ENCODE measurements at regions of chr1 and their contacts with region 1.

Region 1: GRCh38 chr1:173429471-173430402 is 47.4 kb upstream of the PRDX6 start:
- DNase-seq: peak; percentile 28 to 52
- H3K4me3 ChIP-seq: no peak overlapping the region
- H3K4me3 Mint-ChIP-seq: no peak overlapping the region
- H3K27ac Mint-ChIP-seq: peak overlapping the region; percentile 23
- H3K4me1 ChIP-seq: peaks cover 42% of the 10 kb centered on the region
- H3K4me1 Mint-ChIP-seq: peaks cover 24% of the 10 kb centered on the region
- H3K27me3 ChIP-seq: no peaks in the 10 kb centered on the region
- H3K27me3 Mint-ChIP-seq: no peaks in the 10 kb centered on the region
- CTCF ChIP-seq: no peak

Region 2: DNA sequence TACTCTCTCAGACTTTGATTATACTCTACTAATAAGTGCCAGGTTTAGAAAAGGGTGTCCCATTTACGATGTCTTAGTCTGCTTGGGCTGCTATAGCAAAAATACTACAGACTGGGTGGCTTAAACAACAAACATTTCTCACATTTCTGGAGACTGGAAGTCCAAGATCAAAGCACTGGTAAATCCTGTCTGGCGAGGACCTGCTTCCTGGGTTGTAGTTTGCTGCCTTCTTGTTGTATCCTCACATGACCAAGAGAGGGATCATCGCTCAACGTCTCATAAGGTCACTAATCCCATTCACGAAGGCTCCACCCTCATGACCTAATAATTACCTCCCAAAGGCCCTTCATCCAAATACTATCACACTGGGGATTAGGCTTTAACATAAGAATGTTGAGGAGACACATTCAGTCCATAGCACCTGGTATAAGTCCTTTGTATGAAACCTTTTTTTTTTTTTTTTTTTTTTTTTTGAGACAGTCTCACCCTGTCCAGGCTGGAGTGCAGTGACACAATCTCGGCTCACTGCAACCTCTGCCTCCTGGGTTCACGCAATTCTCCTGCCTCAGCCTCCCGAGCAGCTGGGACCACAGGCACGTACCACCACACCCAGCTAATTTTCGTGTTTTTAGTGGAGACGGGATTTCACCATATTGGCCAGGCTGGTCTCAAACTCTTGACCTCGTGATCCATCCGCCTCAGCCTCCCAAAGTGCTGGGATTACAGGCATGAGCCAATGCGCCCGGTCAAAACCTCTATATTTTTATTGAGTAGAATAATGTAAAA is 59.6 kb after region 1 on chr1:
- CTCF ChIA-PET with region 1: no interaction called
- POLR2A ChIA-PET with region 1: no interaction called
- intact Hi-C with region 1: loop called (anchors 1 kb)
- DNase-seq: peak; percentile 80
- H3K4me3 ChIP-seq: no peak overlapping the region
- H3K4me3 Mint-ChIP-seq: no peak overlapping the region
- H3K27ac Mint-ChIP-seq: peak overlapping the region; percentile 65
- H3K4me1 ChIP-seq: peaks cover 20% of the 10 kb centered on the region
- H3K4me1 Mint-ChIP-seq: peaks cover 14% of the 10 kb centered on the region
- H3K27me3 ChIP-seq: no peaks in the 10 kb centered on the region
- H3K27me3 Mint-ChIP-seq: no peaks in the 10 kb centered on the region
- CTCF ChIP-seq: no peak

Region 3: DNA sequence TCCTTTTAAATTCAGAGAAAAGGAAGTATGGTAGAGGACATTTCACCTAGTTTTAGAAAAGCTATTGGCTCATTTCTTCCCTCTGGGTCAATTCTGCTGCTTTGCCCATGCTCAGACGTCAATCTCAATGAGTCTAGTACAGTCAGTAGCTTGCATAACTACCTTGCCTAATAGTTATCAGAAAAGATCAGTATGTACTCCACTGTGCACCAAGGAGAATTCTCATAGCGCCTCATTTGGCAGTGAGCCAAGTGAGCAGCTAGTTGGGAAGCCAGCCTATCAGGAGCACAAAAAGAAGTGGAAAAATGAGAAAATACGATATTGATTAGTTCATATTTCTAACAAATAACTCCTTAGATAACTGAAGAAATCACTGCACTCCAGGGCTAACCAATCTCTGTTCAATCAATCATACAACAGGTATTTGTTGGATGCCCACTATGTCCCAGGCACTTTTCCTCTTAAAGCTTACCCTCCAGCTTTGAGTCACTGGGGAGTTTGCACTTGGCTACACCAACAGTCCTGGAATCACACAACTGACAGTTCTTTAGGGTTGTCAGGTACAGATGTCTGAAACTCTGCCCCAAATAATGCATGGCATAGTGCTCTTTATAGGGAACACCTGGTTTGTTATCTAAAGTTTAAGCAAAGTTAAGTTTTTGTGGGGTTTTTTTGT is 97.6 kb after region 1 on chr1:
- CTCF ChIA-PET with region 1: no interaction called
- POLR2A ChIA-PET with region 1: no interaction called
- intact Hi-C with region 1: no loop called
- DNase-seq: no peak
- H3K4me3 ChIP-seq: no peak overlapping the region
- H3K4me3 Mint-ChIP-seq: no peak overlapping the region
- H3K27ac Mint-ChIP-seq: no peak overlapping the region
- H3K4me1 ChIP-seq: no peaks in the 10 kb centered on the region
- H3K4me1 Mint-ChIP-seq: no peaks in the 10 kb centered on the region
- H3K27me3 ChIP-seq: no peaks in the 10 kb centered on the region
- H3K27me3 Mint-ChIP-seq: peaks cover 3% of the 10 kb centered on the region
- CTCF ChIP-seq: no peak

Region 4: DNA sequence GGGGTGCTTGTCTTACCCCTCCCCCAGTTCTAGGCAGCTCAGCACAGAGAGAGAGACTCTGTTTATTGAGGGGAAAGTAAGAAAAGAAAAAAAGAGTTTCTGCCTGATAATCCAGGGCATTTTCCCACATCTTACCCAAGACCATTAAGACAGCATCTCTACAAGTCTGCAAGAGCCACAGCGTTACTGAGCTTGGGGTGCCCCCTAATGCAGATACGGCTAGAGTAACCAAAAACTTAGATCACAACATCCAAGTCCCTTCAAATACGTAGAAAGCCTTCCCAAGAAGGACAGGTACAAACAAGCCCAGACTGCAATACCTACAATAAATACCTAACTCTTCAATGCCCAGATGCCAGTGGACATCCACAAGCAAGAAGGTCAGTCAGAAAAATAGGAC is 199.2 kb after region 1 on chr1:
- CTCF ChIA-PET with region 1: no interaction called
- POLR2A ChIA-PET with region 1: no interaction called
- intact Hi-C with region 1: loop called (anchors 1 kb)
- DNase-seq: peak in 1 of 2 experiments; percentile 19
- H3K4me3 ChIP-seq: no peak overlapping the region
- H3K4me3 Mint-ChIP-seq: no peak overlapping the region
- H3K27ac Mint-ChIP-seq: no peak overlapping the region
- H3K4me1 ChIP-seq: no peaks in the 10 kb centered on the region
- H3K4me1 Mint-ChIP-seq: no peaks in the 10 kb centered on the region
- H3K27me3 ChIP-seq: no peaks in the 10 kb centered on the region
- H3K27me3 Mint-ChIP-seq: peaks cover 14% of the 10 kb centered on the region
- CTCF ChIP-seq: no peak

Region 5: GRCh38 chr1:173714759-173715537 is 285.2 kb after region 1 on chr1 and contains the start of gene KLHL20:
- CTCF ChIA-PET with region 1: no interaction called
- POLR2A ChIA-PET with region 1: interaction called, 3 read pairs
- intact Hi-C with region 1: loop called (anchors 10 kb)
- DNase-seq: peak; percentile 90 to 91
- H3K4me3 ChIP-seq: peak within 1 kb of the TSS; percentile 90
- H3K4me3 Mint-ChIP-seq: peak within 1 kb of the TSS; percentile 79
- H3K27ac Mint-ChIP-seq: peak within 1 kb of the TSS; percentile 75
- H3K4me1 ChIP-seq: peaks cover 4% of the 10 kb centered on the region; the same call in 1 of the 2 replicates
- H3K4me1 Mint-ChIP-seq: peaks cover 7% of the 10 kb centered on the region
- H3K27me3 ChIP-seq: no peaks in the 10 kb centered on the region
- H3K27me3 Mint-ChIP-seq: no peaks in the 10 kb centered on the region
- CTCF ChIP-seq: no peak
- total RNA-seq, gene KLHL20: 11.7 and 12.8 TPM in 2 replicates

Region 6: GRCh38 chr1:173914366-173914871 is 484.7 kb after region 1 on chr1:
- CTCF ChIA-PET with region 1: no interaction called
- POLR2A ChIA-PET with region 1: no interaction called
- intact Hi-C with region 1: loop called (anchors 10 kb)
- DNase-seq: peak in 1 of 2 experiments; percentile 37
- H3K4me3 ChIP-seq: no peak overlapping the region
- H3K4me3 Mint-ChIP-seq: no peak overlapping the region
- H3K27ac Mint-ChIP-seq: no peak overlapping the region
- H3K4me1 ChIP-seq: 0 out of 2 replicates have a peak, but pooled peaks cover 7% of the 10 kb centered on the region
- H3K4me1 Mint-ChIP-seq: peaks cover 10% of the 10 kb centered on the region
- H3K27me3 ChIP-seq: no peaks in the 10 kb centered on the region
- H3K27me3 Mint-ChIP-seq: no peaks in the 10 kb centered on the region
- CTCF ChIP-seq: peak; percentile 38 to 41

Measured in Caco-2 (cell line).